HepG2 (cell line): ENCODE measurements at regions of chr3 and their contacts with region 1.

Region 1: GRCh38 chr3:39990532-39990931 is 181.1 kb downstream of the MYRIP start:
- DNase-seq: peak; percentile 70
- ATAC-seq: peak; percentile 70
- H3K4me3 ChIP-seq: no peak overlapping the region
- H3K27ac ChIP-seq: no peak overlapping the region
- H3K4me1 ChIP-seq: no peaks in the 10 kb centered on the region
- H3K27me3 ChIP-seq: no peaks in the 10 kb centered on the region
- CTCF ChIP-seq: peak; percentile 80
- EP300 ChIP-seq: no peak
- POLR2A ChIP-seq: no peak
- RAD21 ChIP-seq: peak; percentile 63

Region 2: GRCh38 chr3:39447637-39448483 is 542.7 kb before region 1 on chr3:
- CTCF ChIA-PET with region 1: no interaction called
- POLR2A ChIA-PET with region 1: no interaction called
- in situ Hi-C with region 1: no loop called
- intact Hi-C with region 1: loop called (anchors 5 kb)
- DNase-seq: peak; percentile 80
- ATAC-seq: peak; percentile 98
- H3K4me3 ChIP-seq: no peak overlapping the region
- H3K27ac ChIP-seq: no peak overlapping the region
- H3K4me1 ChIP-seq: no peaks in the 10 kb centered on the region
- H3K27me3 ChIP-seq: no peaks in the 10 kb centered on the region; a peak in 2 of 5 replicates
- CTCF ChIP-seq: peak; percentile 90
- EP300 ChIP-seq: no peak
- POLR2A ChIP-seq: no peak
- RAD21 ChIP-seq: peak; percentile 52

Region 3: GRCh38 chr3:39668420-39668819 is 322.1 kb before region 1 on chr3:
- CTCF ChIA-PET with region 1: interaction called, 11 read pairs
- POLR2A ChIA-PET with region 1: no interaction called
- in situ Hi-C with region 1: no loop called
- intact Hi-C with region 1: loop called (anchors 1 kb)
- DNase-seq: peak; percentile 38
- ATAC-seq: peak; percentile 67
- H3K4me3 ChIP-seq: no peak overlapping the region
- H3K27ac ChIP-seq: no peak overlapping the region
- H3K4me1 ChIP-seq: no peaks in the 10 kb centered on the region
- H3K27me3 ChIP-seq: no peaks in the 10 kb centered on the region; a peak in 1 of 5 replicates
- CTCF ChIP-seq: peak; percentile 64
- EP300 ChIP-seq: no peak
- POLR2A ChIP-seq: no peak
- RAD21 ChIP-seq: no peak

Region 4: GRCh38 chr3:39707314-39707909 is 283.1 kb before region 1 on chr3:
- CTCF ChIA-PET with region 1: interaction called, 15 read pairs
- POLR2A ChIA-PET with region 1: no interaction called
- in situ Hi-C with region 1: loop called (anchors 5 kb)
- intact Hi-C with region 1: loop called (anchors 1 kb)
- DNase-seq: peak; percentile 13
- ATAC-seq: peak; percentile 57
- H3K4me3 ChIP-seq: no peak overlapping the region
- H3K27ac ChIP-seq: no peak overlapping the region
- H3K4me1 ChIP-seq: no peaks in the 10 kb centered on the region
- H3K27me3 ChIP-seq: no peaks in the 10 kb centered on the region
- CTCF ChIP-seq: peak; percentile 62
- EP300 ChIP-seq: no peak
- POLR2A ChIP-seq: no peak
- RAD21 ChIP-seq: no peak

Region 5: DNA sequence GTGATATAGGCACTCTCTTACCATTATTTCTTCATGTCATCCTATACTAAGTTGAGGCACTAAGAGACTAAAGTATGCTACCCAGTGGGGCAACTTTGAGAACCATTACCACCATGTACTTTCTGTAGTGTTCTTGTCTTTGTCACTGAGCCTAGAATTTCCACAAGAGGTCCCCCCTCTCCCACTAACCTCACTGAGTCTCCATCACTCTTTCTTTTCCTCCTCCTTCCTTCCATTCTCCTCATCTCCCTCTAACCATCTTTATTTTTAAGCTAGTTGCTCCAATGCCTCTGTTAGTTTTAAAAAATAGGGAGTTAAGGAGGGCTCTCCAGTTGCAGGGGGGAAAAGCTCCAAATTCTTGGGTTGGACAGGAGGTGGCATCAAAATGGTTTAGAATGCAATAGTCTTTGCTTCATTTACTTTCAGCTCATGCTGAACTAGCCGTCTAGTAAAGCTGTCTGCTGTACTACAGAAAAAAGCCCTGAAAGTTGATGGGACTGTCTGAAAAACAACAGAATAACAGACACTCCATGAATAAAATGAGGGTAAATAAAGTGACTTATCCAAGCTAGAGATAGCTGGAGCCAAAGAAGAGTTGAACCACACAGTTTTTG is 266.2 kb before region 1 on chr3:
- CTCF ChIA-PET with region 1: interaction called, 5 read pairs
- POLR2A ChIA-PET with region 1: no interaction called
- in situ Hi-C with region 1: no loop called
- intact Hi-C with region 1: loop called (anchors 5 kb)
- DNase-seq: no peak
- ATAC-seq: 0 out of 3 replicates have a peak, but pooled peaks have one; percentile 31
- H3K4me3 ChIP-seq: no peak overlapping the region
- H3K27ac ChIP-seq: no peak overlapping the region
- H3K4me1 ChIP-seq: no peaks in the 10 kb centered on the region
- H3K27me3 ChIP-seq: no peaks in the 10 kb centered on the region; a peak in 1 of 5 replicates
- CTCF ChIP-seq: peak; percentile 60
- EP300 ChIP-seq: no peak
- POLR2A ChIP-seq: no peak
- RAD21 ChIP-seq: no peak

Region 6: DNA sequence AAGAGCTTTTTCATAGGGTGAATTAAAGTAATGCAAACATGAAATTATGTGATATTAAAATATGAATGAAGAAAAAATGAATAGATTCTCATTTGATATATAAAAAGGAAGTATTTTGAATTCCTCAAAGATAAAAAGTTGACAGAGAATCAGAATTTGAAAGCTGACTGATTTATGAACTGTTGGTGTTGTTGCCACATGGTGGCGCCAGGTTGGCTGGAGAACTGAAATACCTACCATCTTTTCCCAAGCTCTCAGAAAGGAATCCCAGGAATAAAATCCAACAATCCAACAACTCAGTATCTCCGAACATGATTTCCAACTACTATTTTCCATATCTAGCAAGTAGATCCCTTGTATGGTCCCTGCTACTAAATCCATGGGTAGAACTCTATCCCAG is 178.0 kb before region 1 on chr3:
- CTCF ChIA-PET with region 1: interaction called, 6 read pairs
- POLR2A ChIA-PET with region 1: no interaction called
- in situ Hi-C with region 1: loop called (anchors 5 kb)
- intact Hi-C with region 1: loop called (anchors 1 kb)
- DNase-seq: peak; percentile 6
- ATAC-seq: no peak
- H3K4me3 ChIP-seq: no peak overlapping the region
- H3K27ac ChIP-seq: no peak overlapping the region
- H3K4me1 ChIP-seq: peaks cover 19% of the 10 kb centered on the region
- H3K27me3 ChIP-seq: peaks cover 7 to 31% of the 10 kb centered on the region in 2 experiments; a peak in 4 of 5 replicates
- CTCF ChIP-seq: peak; percentile 47
- EP300 ChIP-seq: no peak
- POLR2A ChIP-seq: no peak
- RAD21 ChIP-seq: no peak